ENCODE measurements at regions of chr12 and their contacts with region 1.

Region 1: DNA sequence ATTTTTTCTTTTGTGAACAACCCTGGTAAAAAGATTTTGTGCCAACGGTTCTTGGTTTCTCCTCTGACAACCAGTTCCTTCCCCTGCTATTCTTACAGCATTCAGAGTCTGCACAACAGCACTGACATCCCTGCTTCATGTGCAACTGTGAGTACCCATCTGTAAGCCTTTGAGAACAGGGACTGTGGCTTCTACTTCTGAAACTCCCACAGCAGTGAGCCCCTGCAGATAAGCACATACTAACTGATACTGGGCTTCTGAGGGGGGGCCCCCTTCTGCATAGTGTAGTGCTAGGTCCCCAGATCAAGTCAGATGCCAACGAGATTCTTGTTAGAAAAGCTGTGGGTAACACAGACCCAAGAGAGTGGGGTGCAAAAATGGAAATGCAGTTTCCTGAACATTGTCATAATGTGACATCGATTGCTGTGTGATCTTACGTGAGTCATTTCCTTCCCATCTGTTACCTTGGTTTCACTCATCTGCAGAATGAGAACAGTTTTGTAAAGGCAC is 11.1 kb upstream of the NINJ2 start:
- DNase-seq: peak; percentile 77 to 91 (median 83)
- H3K4me3 ChIP-seq: peak overlapping the region; percentile 27 to 44
- H3K4me3 Mint-ChIP-seq: peak overlapping the region; percentile 67 to 91 (median 84)
- H3K27ac ChIP-seq: peak overlapping the region; percentile 70
- H3K27ac Mint-ChIP-seq: peak overlapping the region; percentile 93 to 100 (median 99)
- H3K4me1 ChIP-seq: peaks cover 61% of the 10 kb centered on the region
- H3K4me1 Mint-ChIP-seq: peaks cover 36 to 67% (median 53%) of the 10 kb centered on the region in 4 donors
- H3K27me3 ChIP-seq: no peaks in the 10 kb centered on the region
- H3K27me3 Mint-ChIP-seq: no peaks in the 10 kb centered on the region

Region 2: GRCh38 chr12:546921-547845 is 127.1 kb before region 1 on chr12:
- CTCF ChIA-PET with region 1: no interaction called
- POLR2A ChIA-PET with region 1: no interaction called
- intact Hi-C with region 1: no loop called
- DNase-seq: peak in 4 of 5 donors; percentile 52 to 70 (median 60)
- H3K4me3 ChIP-seq: no peak overlapping the region
- H3K4me3 Mint-ChIP-seq: peak overlapping the region in 1 of 8 donors; percentile 5
- H3K27ac ChIP-seq: no peak overlapping the region
- H3K27ac Mint-ChIP-seq: peak overlapping the region in 2 of 7 donors; percentile 42
- H3K4me1 ChIP-seq: peaks cover 14% of the 10 kb centered on the region
- H3K4me1 Mint-ChIP-seq: peaks cover 12 to 28% (median 21%) of the 10 kb centered on the region in 4 donors
- H3K27me3 ChIP-seq: no peaks in the 10 kb centered on the region
- H3K27me3 Mint-ChIP-seq: peaks cover 5 to 8% of the 10 kb centered on the region in 2 donors

Region 3: DNA sequence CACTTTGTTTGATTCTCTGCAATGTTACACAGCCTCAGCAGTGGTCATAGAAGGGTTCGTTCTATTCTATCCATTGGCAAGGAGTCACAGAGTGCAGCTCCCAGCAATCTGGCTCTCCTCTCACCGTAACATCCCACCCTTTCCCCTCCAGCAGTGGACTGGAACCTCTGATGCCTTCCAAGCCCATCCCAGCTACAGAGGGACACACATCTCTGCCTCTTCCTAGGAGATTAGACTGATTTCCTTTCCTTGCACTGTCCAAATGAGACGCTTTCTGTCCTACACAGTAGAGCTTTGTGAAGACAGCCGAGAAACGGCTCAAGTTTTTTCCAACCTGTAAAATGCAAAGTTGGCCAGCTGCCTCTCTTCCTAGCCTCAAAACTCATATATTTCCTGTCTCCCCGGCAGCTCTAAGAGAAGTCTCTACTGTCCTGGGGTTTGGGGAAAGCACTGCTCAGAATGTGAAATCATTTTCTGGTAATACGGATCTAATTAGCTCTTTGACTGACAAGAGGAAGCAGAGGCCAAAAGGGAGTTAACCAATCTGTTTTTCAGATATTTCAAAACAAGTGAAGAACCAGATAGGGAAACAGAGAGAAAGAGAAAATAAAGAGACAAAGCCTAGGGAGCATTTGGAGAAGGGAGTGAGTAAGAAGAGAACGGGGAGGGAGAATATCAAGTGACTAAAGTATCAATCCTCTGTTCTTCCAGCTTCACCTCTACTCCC is 11.6 kb before region 1 on chr12:
- CTCF ChIA-PET with region 1: interaction called, 4 read pairs
- POLR2A ChIA-PET with region 1: interaction called, 16 read pairs
- intact Hi-C with region 1: no loop called
- DNase-seq: no peak
- H3K4me3 ChIP-seq: peak overlapping the region in 1 of 2 donors; percentile 16
- H3K4me3 Mint-ChIP-seq: peak overlapping the region; percentile 80 to 93 (median 86)
- H3K27ac ChIP-seq: peak overlapping the region; percentile 49
- H3K27ac Mint-ChIP-seq: peak overlapping the region; percentile 14 to 95 (median 90)
- H3K4me1 ChIP-seq: peaks cover 50% of the 10 kb centered on the region
- H3K4me1 Mint-ChIP-seq: peaks cover 29 to 58% (median 48%) of the 10 kb centered on the region in 4 donors
- H3K27me3 ChIP-seq: no peaks in the 10 kb centered on the region
- H3K27me3 Mint-ChIP-seq: no peaks in the 10 kb centered on the region

Region 4: GRCh38 chr12:697481-697880 is 23.2 kb after region 1 on chr12:
- CTCF ChIA-PET with region 1: interaction called, 3 read pairs
- POLR2A ChIA-PET with region 1: interaction called, 10 read pairs
- intact Hi-C with region 1: no loop called
- DNase-seq: no peak
- H3K4me3 ChIP-seq: no peak overlapping the region
- H3K4me3 Mint-ChIP-seq: peak overlapping the region in 7 of 8 donors; percentile 43 to 81 (median 55)
- H3K27ac ChIP-seq: no peak overlapping the region
- H3K27ac Mint-ChIP-seq: peak overlapping the region; percentile 52 to 94 (median 91)
- H3K4me1 ChIP-seq: peaks cover 17% of the 10 kb centered on the region
- H3K4me1 Mint-ChIP-seq: peaks cover 7 to 27% (median 15%) of the 10 kb centered on the region in 4 donors
- H3K27me3 ChIP-seq: no peaks in the 10 kb centered on the region
- H3K27me3 Mint-ChIP-seq: no peaks in the 10 kb centered on the region

Region 5: DNA sequence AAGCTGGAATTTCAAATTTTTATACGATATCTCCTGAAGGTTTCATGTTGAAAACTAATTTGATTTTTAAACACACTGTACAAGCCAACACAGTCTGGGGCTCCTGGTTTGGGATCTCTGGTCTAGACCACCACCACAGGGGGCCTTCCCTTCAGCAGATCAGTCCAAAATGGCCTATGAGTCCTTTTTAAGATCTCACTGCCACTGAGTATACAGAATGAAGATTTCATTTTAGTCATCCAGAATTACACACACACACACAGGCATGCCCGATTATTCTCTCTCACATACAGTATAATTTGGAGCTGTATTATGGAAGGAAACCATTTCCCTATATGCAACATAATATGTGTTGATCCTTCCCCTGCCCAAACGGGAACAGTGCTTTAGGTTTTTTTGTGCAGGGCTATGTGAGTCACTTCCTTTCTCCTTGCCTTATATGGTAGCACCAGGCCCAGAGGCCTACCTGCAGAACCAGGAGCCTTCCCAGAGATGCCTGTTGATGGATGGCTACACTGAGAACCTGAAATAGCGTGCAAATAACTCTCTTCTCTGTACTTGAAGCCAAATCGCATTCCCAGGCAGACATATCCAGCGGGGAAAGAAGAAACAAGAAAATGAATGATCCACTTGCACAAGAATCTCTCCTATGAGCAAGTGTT is 50.0 kb after region 1 on chr12:
- CTCF ChIA-PET with region 1: interaction called, 3 read pairs
- POLR2A ChIA-PET with region 1: interaction called, 12 read pairs
- intact Hi-C with region 1: no loop called
- DNase-seq: peak in 1 of 5 donors; percentile 20
- H3K4me3 ChIP-seq: no peak overlapping the region
- H3K4me3 Mint-ChIP-seq: peak overlapping the region in 6 of 8 donors; percentile 1 to 49 (median 32)
- H3K27ac ChIP-seq: peak overlapping the region; percentile 34
- H3K27ac Mint-ChIP-seq: peak overlapping the region; percentile 59 to 93 (median 85)
- H3K4me1 ChIP-seq: peaks cover 61% of the 10 kb centered on the region
- H3K4me1 Mint-ChIP-seq: peaks cover 46 to 82% (median 65%) of the 10 kb centered on the region in 4 donors
- H3K27me3 ChIP-seq: no peaks in the 10 kb centered on the region
- H3K27me3 Mint-ChIP-seq: no peaks in the 10 kb centered on the region

Measured in CD4-positive, alpha-beta memory T cell (primary cell).